ENCODE measurements at regions of chr10 and their contacts with region 1.

Region 1: DNA sequence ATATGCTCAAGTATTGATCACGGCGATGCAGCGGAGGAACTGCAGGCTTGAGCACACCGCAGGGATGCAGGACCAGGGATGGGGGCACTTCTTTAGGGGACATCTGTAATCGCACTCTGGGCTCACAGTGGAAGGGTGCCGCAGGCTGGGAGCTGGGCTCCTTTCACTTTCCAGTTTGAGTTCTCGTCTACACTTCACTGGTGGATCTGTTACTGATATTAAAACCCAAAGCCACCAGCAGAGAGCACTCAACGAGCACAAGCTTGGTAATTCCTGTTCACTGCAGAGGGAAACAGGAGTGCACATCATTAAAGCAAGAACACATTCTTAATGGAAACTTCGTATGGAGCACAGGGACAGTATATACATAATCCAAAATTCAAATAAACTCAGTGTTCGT is 91.3 kb downstream of the PARD3 start:
- DNase-seq: peak in 1 of 2 experiments; percentile 40
- H3K4me3 ChIP-seq: no peak overlapping the region
- H3K27ac ChIP-seq: no peak overlapping the region
- H3K4me1 ChIP-seq: no peaks in the 10 kb centered on the region
- H3K27me3 ChIP-seq: no peaks in the 10 kb centered on the region
- CTCF ChIP-seq: peak in 2 of 3 experiments; percentile 38 to 53; a peak in 2 of 4 replicates
- EP300 ChIP-seq: no peak
- POLR2A ChIP-seq: no peak
- RAD21 ChIP-seq: peak; percentile 59 to 68

Region 2: DNA sequence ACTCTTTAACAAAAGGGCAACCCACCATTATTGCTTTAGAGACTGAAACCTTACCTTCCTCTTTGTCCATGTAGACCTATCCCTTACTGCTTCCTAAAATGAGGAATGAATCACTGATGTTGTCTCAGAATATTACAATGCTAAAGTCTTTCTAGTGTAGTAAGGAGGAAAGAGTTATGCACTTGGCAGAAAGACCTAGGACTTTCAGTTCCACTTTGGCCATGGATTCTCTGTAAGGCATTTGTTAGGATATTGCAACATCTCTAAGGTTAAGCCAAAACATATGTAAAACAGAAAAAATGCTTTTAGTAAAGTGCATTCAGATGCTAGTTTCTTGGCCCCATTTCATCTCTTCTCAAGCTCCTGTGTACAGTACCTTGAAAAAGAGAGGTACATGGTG is 139.6 kb before region 1 on chr10:
- CTCF ChIA-PET with region 1: no interaction called
- POLR2A ChIA-PET with region 1: no interaction called
- DNase-seq: no peak
- H3K4me3 ChIP-seq: no peak overlapping the region
- H3K27ac ChIP-seq: no peak overlapping the region
- H3K4me1 ChIP-seq: peaks cover 0 to 9% (median 8%) of the 10 kb centered on the region in 4 experiments; a peak in 4 of 7 replicates
- H3K27me3 ChIP-seq: no peaks in the 10 kb centered on the region
- CTCF ChIP-seq: no peak
- EP300 ChIP-seq: no peak
- POLR2A ChIP-seq: no peak
- RAD21 ChIP-seq: no peak

Region 3: GRCh38 chr10:34599026-34599795 is 124.5 kb before region 1 on chr10:
- CTCF ChIA-PET with region 1: no interaction called
- POLR2A ChIA-PET with region 1: no interaction called
- DNase-seq: no peak
- H3K4me3 ChIP-seq: no peak overlapping the region
- H3K27ac ChIP-seq: no peak overlapping the region
- H3K4me1 ChIP-seq: peaks cover 0 to 3% (median 2%) of the 10 kb centered on the region in 4 experiments; a peak in 2 of 7 replicates
- H3K27me3 ChIP-seq: no peaks in the 10 kb centered on the region
- CTCF ChIP-seq: no peak
- EP300 ChIP-seq: no peak
- POLR2A ChIP-seq: no peak
- RAD21 ChIP-seq: no peak

Region 4: DNA sequence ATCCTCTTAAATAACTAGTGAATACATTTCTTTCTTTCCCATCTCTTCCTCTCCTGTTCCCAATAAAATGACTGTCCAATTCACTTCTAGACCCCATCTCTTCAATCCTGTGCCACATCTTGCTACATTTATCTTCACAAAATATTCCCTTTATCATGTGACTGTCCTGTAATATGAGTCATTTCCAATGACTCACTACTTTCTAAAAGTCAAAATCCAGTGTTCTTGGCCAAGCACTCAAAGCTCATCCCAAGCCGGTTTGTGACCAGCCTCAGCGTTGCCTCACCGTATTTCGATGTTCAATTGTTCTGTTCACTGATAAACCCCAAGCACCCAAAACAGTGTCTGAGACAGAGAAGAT is 13.4 kb before region 1 on chr10:
- CTCF ChIA-PET with region 1: interaction called, 35 read pairs
- POLR2A ChIA-PET with region 1: interaction called, 3 read pairs
- DNase-seq: no peak
- H3K4me3 ChIP-seq: no peak overlapping the region
- H3K27ac ChIP-seq: no peak overlapping the region
- H3K4me1 ChIP-seq: peaks cover 0 to 5% (median 2%) of the 10 kb centered on the region in 4 experiments; a peak in 2 of 7 replicates
- H3K27me3 ChIP-seq: no peaks in the 10 kb centered on the region
- CTCF ChIP-seq: no peak
- EP300 ChIP-seq: no peak
- POLR2A ChIP-seq: no peak
- RAD21 ChIP-seq: no peak

Region 5: GRCh38 chr10:34739915-34740314 is 16.2 kb after region 1 on chr10:
- CTCF ChIA-PET with region 1: interaction called, 20 read pairs
- POLR2A ChIA-PET with region 1: no interaction called
- DNase-seq: peak; percentile 58 to 64
- H3K4me3 ChIP-seq: peak overlapping the region in 3 of 4 experiments; percentile 22 to 46 (median 27); a peak in 6 of 8 replicates
- H3K27ac ChIP-seq: peak overlapping the region; percentile 9; the same call in 1 of the 2 replicates
- H3K4me1 ChIP-seq: peaks cover 16 to 26% (median 19%) of the 10 kb centered on the region in 4 experiments
- H3K27me3 ChIP-seq: no peaks in the 10 kb centered on the region
- CTCF ChIP-seq: no peak
- EP300 ChIP-seq: no peak
- POLR2A ChIP-seq: peak; percentile 45 to 63; a peak in 2 of 3 replicates
- RAD21 ChIP-seq: no peak

Region 6: DNA sequence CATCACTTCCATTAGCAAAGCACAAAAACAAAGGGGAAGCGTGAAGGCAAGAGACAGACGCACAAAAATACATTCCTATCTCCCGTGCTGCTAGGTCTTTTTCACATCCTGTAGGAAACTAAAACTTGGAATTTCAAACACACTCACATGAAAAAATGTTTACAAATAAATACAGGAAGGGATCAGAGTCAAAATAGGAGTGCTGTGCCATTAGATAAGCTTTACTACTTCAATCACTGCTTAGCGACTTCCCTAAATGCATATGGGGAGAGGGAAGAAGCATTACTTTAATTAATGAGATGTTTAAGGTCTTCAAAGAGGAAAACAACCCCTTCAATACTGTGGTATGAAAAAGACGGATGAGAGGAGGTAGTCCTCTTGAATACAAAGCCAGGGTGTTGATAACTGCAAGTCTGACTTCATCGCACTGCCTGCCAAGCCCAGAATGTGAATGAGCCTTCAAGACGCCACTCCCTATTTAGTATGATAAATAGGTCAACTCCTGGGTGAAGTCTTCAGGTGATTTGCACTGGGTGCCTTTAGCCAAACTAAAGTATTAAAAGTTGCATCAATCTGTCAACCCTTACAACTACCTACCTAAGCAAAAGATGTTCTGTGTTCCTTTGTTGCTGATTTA is 77.5 kb after region 1 on chr10:
- CTCF ChIA-PET with region 1: interaction called, 10 read pairs
- POLR2A ChIA-PET with region 1: interaction called, 3 read pairs
- DNase-seq: no peak
- H3K4me3 ChIP-seq: no peak overlapping the region
- H3K27ac ChIP-seq: no peak overlapping the region
- H3K4me1 ChIP-seq: peaks cover 0 to 10% (median 4%) of the 10 kb centered on the region in 4 experiments; a peak in 3 of 7 replicates
- H3K27me3 ChIP-seq: no peaks in the 10 kb centered on the region
- CTCF ChIP-seq: no peak
- EP300 ChIP-seq: no peak
- POLR2A ChIP-seq: no peak
- RAD21 ChIP-seq: no peak

Region 7: GRCh38 chr10:34985823-34986222 is 262.1 kb after region 1 on chr10:
- CTCF ChIA-PET with region 1: interaction called, 12 read pairs
- POLR2A ChIA-PET with region 1: no interaction called
- DNase-seq: no peak
- H3K4me3 ChIP-seq: no peak overlapping the region
- H3K27ac ChIP-seq: no peak overlapping the region
- H3K4me1 ChIP-seq: no peaks in the 10 kb centered on the region
- H3K27me3 ChIP-seq: no peaks in the 10 kb centered on the region
- CTCF ChIP-seq: peak; percentile 59 to 69 (median 62)
- EP300 ChIP-seq: no peak
- POLR2A ChIP-seq: no peak
- RAD21 ChIP-seq: peak; percentile 87 to 90